GM12878 (cell line): ENCODE measurements at regions of chr20 and their contacts with region 1.

Region 1: DNA sequence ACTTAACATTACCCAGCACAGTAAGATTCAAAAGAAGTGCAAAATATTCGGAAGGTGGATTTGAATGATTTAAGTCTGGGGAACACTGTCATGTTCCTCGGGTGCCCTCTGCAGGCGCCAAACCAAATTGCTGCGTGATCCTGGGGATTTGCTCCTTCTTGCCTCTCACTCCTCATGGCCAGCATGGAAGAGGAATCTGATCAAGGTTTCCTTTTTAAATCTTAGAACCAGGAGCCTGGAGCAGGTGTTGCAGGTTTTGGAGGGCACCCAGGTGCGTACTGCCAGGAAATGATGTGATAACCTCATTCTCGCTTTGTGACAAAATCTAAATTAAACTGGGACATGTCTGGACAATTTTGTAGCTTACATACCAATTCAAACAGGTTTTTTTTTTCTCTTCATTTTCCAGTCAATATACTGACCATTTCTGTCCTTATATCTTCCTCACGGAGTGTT is 8.1 kb upstream of the PFDN4 start:
- DNase-seq: peak; percentile 39
- ATAC-seq: peak; percentile 71
- H3K4me3 ChIP-seq: no peak overlapping the region
- H3K27ac ChIP-seq: no peak overlapping the region
- H3K4me1 ChIP-seq: peaks cover 13% of the 10 kb centered on the region
- H3K27me3 ChIP-seq: no peaks in the 10 kb centered on the region
- CTCF ChIP-seq: peak; percentile 82 to 96 (median 94)
- EP300 ChIP-seq: no peak
- POLR2A ChIP-seq: no peak
- RAD21 ChIP-seq: peak; percentile 93

Region 2: DNA sequence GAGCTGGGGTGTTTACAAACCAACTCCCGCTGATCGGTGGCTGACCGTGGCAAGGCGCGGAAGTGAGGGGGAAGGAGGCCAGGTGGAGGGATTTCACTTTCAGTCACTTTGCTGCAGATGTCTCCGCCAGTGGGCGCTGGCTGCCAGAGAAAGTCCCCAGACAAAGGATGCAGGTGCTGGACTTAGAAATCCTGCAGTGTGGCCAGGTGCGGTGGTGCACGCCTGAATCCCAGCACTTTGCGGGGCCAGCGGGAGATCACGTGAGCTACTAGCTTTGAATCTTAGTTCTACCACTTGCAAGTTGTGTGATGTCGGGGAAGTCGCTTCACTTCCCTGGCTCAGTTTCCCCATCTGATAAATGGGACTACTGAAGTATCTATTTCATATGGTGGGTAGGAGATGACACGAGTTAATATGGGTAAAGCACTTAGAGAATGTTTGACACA is 786.5 kb before region 1 on chr20:
- CTCF ChIA-PET with region 1: interaction called, 4 read pairs
- POLR2A ChIA-PET with region 1: no interaction called
- RAD21 ChIA-PET with region 1: no interaction called
- SMC1A ChIA-PET with region 1: no interaction called
- in situ Hi-C with region 1: loop called (anchors 5 kb)
- intact Hi-C with region 1: loop called (anchors 10 kb)
- DNase-seq: peak; percentile 52
- ATAC-seq: peak; percentile 98
- H3K4me3 ChIP-seq: no peak overlapping the region
- H3K27ac ChIP-seq: no peak overlapping the region
- H3K4me1 ChIP-seq: peaks cover 2% of the 10 kb centered on the region; the same call in 1 of the 2 replicates
- H3K27me3 ChIP-seq: no peaks in the 10 kb centered on the region
- CTCF ChIP-seq: peak; percentile 87 to 96 (median 90)
- EP300 ChIP-seq: peak in 1 of 2 experiments; percentile 40; a peak in 1 of 4 replicates
- POLR2A ChIP-seq: no peak
- RAD21 ChIP-seq: peak; percentile 93

Region 3: DNA sequence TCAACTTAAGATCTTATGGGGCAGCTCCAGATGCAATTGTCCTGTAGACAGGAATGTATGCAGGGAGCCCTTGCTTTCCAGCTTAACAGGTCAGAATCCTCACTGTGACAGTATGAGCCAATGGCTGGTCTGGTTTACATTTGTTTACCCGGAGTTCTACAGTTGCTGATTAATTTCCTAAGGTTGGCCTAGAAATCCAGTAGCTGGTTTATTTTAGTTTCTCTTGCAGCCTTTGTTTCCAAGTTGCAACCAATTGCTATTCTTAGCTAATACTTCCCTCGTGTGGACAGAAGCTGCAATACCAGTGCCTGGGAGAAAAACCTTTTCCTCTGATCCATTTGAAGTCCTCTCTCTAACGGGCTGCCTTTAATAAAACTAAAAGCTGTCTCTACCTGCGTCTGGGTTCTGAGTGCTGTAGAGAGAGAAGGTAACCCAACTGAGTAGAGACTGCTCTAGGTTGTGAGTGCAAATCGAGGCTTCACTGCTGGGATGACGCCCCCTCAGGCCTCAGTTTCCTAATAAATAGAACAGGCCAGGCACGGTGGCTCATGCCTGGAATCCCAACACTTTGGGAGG is 652.0 kb before region 1 on chr20:
- CTCF ChIA-PET with region 1: interaction called, 4 read pairs
- POLR2A ChIA-PET with region 1: no interaction called
- RAD21 ChIA-PET with region 1: interaction called, 3 read pairs
- SMC1A ChIA-PET with region 1: no interaction called
- in situ Hi-C with region 1: loop called (anchors 10 kb)
- intact Hi-C with region 1: no loop called
- DNase-seq: peak; percentile 21
- ATAC-seq: peak; percentile 70
- H3K4me3 ChIP-seq: no peak overlapping the region
- H3K27ac ChIP-seq: no peak overlapping the region
- H3K4me1 ChIP-seq: no peaks in the 10 kb centered on the region
- H3K27me3 ChIP-seq: no peaks in the 10 kb centered on the region
- CTCF ChIP-seq: peak; percentile 65 to 78 (median 65)
- EP300 ChIP-seq: no peak
- POLR2A ChIP-seq: no peak
- RAD21 ChIP-seq: peak; percentile 92

Region 4: DNA sequence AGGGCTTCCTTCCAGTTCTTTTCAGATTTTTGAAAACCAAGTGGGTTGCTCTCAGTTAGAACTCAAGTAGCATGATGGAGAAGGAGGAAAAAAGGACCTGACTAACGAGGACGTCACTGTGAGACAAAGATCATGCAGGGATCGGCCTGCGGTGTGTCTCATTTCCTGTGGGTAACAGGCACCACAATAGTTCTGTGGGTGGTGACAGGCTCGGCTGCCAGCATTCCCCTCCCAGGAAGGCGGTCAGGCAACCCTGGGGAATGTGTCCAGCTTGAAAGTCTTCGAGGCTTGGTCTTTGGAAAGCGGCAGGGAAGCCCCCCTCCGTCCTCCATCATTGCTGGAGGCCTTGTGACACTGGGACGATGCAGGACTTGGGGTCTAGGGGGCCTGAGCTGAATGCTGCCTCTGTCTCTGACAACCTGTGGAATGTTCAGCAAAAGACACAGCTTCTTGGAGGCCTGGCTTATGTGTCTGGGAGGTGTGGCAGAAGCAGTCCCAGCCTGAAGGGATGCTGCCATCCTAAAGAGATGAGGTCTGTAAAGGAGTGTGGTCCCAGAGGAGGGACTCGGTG is 250.3 kb before region 1 on chr20:
- CTCF ChIA-PET with region 1: no interaction called
- POLR2A ChIA-PET with region 1: no interaction called
- RAD21 ChIA-PET with region 1: no interaction called
- SMC1A ChIA-PET with region 1: no interaction called
- in situ Hi-C with region 1: loop called (anchors 5 kb)
- intact Hi-C with region 1: loop called (anchors 5 kb)
- DNase-seq: no peak
- ATAC-seq: peak; percentile 93
- H3K4me3 ChIP-seq: peak overlapping the region; percentile 18; the same call in 1 of the 2 replicates
- H3K27ac ChIP-seq: peak overlapping the region; percentile 74
- H3K4me1 ChIP-seq: peaks cover 20% of the 10 kb centered on the region
- H3K27me3 ChIP-seq: no peaks in the 10 kb centered on the region
- CTCF ChIP-seq: no peak
- EP300 ChIP-seq: peak; percentile 65 to 82; a peak in 3 of 4 replicates
- POLR2A ChIP-seq: peak; percentile 48; the same call in 1 of the 2 replicates
- RAD21 ChIP-seq: no peak

Region 5: GRCh38 chr20:54093423-54094267 is 106.1 kb before region 1 on chr20:
- CTCF ChIA-PET with region 1: interaction called, 153 read pairs
- POLR2A ChIA-PET with region 1: no interaction called
- RAD21 ChIA-PET with region 1: interaction called, 9 read pairs
- SMC1A ChIA-PET with region 1: interaction called, 78 read pairs
- in situ Hi-C with region 1: no loop called
- intact Hi-C with region 1: loop called (anchors 1 kb)
- DNase-seq: no peak
- ATAC-seq: no peak
- H3K4me3 ChIP-seq: no peak overlapping the region
- H3K27ac ChIP-seq: no peak overlapping the region
- H3K4me1 ChIP-seq: peaks cover 8% of the 10 kb centered on the region
- H3K27me3 ChIP-seq: no peaks in the 10 kb centered on the region
- CTCF ChIP-seq: no peak
- EP300 ChIP-seq: no peak
- POLR2A ChIP-seq: no peak
- RAD21 ChIP-seq: no peak

Region 6: DNA sequence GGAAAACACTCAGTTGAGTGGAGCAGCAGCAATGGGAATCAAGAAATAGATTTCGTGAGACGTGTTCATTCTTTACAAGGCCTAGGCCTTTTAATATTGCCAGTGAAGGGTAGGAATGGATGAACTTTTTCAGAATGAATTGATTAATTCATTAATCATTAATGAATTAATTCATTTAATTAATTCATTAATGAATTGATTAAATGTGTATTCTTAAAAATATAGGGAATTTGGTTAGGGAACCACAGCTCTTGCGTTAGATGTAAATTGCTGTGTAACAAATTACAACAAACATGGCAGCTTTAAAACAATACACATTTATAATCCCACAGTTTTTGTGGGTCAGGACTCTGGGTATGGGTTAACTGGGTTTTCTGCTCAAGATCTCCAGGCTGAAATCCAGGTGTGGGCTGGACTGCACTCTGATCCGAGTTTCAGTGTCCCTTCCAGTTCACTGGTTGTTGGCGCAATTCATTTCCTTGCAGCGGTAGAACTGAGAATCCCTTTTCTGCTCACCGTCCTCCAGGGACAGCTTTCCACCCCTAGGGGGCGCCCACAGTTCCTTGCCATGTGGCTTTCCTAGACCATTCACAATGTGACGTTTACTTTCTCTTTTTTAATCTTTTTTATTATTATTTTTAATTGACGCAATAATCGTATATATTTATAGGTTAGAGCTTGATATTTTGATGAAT is 96.5 kb before region 1 on chr20:
- CTCF ChIA-PET with region 1: interaction called, 153 read pairs
- POLR2A ChIA-PET with region 1: no interaction called
- RAD21 ChIA-PET with region 1: interaction called, 8 read pairs
- SMC1A ChIA-PET with region 1: interaction called, 78 read pairs
- in situ Hi-C with region 1: loop called (anchors 5 kb)
- intact Hi-C with region 1: no loop called
- DNase-seq: no peak
- ATAC-seq: peak; percentile 97
- H3K4me3 ChIP-seq: no peak overlapping the region
- H3K27ac ChIP-seq: no peak overlapping the region
- H3K4me1 ChIP-seq: no peaks in the 10 kb centered on the region
- H3K27me3 ChIP-seq: no peaks in the 10 kb centered on the region
- CTCF ChIP-seq: peak; percentile 80 to 90 (median 90)
- EP300 ChIP-seq: no peak
- POLR2A ChIP-seq: no peak
- RAD21 ChIP-seq: peak; percentile 61

Region 7: GRCh38 chr20:54214566-54214965 is 14.8 kb after region 1 on chr20:
- CTCF ChIA-PET with region 1: interaction called, 30 read pairs
- POLR2A ChIA-PET with region 1: no interaction called
- RAD21 ChIA-PET with region 1: interaction called, 3 read pairs
- SMC1A ChIA-PET with region 1: interaction called, 5 read pairs
- in situ Hi-C with region 1: no loop called
- intact Hi-C with region 1: no loop called
- DNase-seq: no peak
- ATAC-seq: no peak
- H3K4me3 ChIP-seq: no peak overlapping the region
- H3K27ac ChIP-seq: no peak overlapping the region
- H3K4me1 ChIP-seq: no peaks in the 10 kb centered on the region
- H3K27me3 ChIP-seq: no peaks in the 10 kb centered on the region
- CTCF ChIP-seq: no peak
- EP300 ChIP-seq: no peak
- POLR2A ChIP-seq: no peak
- RAD21 ChIP-seq: no peak

Region 8: DNA sequence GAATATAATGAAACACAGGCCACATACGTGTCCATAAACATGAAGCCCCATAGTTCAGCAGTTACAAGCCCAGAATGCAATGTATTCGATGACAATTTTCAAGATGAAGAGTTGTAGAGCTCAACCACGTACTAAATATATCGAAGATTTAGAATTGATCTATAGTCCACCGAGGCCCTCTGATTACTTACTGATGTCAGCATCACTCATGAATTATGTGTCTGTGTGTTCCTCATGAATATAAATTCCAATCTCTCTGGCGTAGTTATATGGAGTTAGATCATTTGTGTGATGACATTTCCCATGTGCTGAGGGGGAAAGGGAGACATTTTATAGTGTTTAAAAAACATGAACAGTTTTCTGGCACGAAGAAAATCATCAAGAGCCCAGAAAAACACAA is 105.7 kb after region 1 on chr20:
- CTCF ChIA-PET with region 1: no interaction called
- POLR2A ChIA-PET with region 1: no interaction called
- RAD21 ChIA-PET with region 1: no interaction called
- SMC1A ChIA-PET with region 1: no interaction called
- in situ Hi-C with region 1: no loop called
- intact Hi-C with region 1: no loop called
- DNase-seq: no peak
- ATAC-seq: no peak
- H3K4me3 ChIP-seq: no peak overlapping the region
- H3K27ac ChIP-seq: no peak overlapping the region
- H3K4me1 ChIP-seq: no peaks in the 10 kb centered on the region
- H3K27me3 ChIP-seq: no peaks in the 10 kb centered on the region
- CTCF ChIP-seq: no peak
- EP300 ChIP-seq: no peak
- POLR2A ChIP-seq: no peak
- RAD21 ChIP-seq: no peak